ENCODE measurements at regions of chr7 and their contacts with region 1.

Region 1: GRCh38 chr7:99374103-99375064 is at the start of gene ARPC1B:
- H3K4me3 Mint-ChIP-seq: peak within 1 kb of the TSS; percentile 86
- H3K27ac Mint-ChIP-seq: peak within 1 kb of the TSS; percentile 92
- H3K4me1 Mint-ChIP-seq: peaks cover 70% of the 10 kb centered on the region
- H3K27me3 Mint-ChIP-seq: no peaks in the 10 kb centered on the region

Region 2: DNA sequence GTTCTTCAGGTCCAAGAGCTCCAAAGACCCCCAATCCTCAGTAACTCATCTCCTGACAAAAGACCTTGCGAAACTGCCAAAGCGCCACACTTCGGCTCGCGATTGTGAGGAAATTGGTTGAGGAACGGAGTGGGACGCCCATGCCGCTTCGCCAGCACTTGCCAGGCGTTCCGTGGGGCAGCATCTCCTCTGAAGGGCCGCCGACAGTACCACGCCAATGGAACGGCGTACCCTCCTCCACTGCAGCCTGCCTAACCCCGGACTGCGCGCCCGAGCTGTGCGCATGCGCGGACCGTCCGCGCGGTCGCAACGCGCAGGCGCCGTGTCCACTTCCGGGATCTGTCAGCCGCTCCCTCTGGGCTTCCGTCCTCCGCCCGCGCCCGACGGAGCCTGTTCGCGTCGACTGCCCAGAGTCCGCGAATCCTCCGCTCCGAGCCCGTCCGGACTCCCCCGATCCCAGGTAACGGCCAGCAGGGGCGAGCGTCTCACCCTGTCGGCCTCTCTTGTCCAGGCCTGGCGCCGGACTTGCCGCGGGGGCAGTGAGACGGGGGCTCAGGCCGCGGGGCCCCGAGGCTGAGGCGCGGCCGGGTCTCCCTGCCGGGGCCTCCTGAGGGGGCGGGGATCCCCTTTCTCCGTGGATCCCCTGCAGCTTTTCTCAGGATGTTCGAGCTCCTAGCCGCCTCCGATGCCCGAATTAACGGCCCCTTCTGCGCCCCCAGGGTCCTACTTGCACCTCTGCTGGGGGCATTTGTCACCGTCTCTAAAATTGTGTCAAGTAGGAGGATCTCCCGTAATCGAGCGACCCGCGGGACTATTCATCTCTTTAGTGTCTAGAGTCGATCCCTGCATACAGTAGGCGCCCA is 48.6 kb before region 1 on chr7 and contains the start of gene ARPC1A:
- intact Hi-C with region 1: loop called (anchors 5 kb)
- H3K4me3 Mint-ChIP-seq: peak within 1 kb of the TSS; percentile 72
- H3K27ac Mint-ChIP-seq: peak within 1 kb of the TSS; percentile 91
- H3K4me1 Mint-ChIP-seq: peaks cover 49% of the 10 kb centered on the region
- H3K27me3 Mint-ChIP-seq: no peaks in the 10 kb centered on the region

Region 3: GRCh38 chr7:99340659-99341058 is 33.7 kb before region 1 on chr7:
- intact Hi-C with region 1: no loop called
- H3K4me3 Mint-ChIP-seq: no peak overlapping the region
- H3K27ac Mint-ChIP-seq: no peak overlapping the region
- H3K4me1 Mint-ChIP-seq: no peaks in the 10 kb centered on the region
- H3K27me3 Mint-ChIP-seq: no peaks in the 10 kb centered on the region

Region 4: GRCh38 chr7:99385564-99385963 is 11.2 kb after region 1 on chr7:
- intact Hi-C with region 1: loop called (anchors 1 kb)
- H3K4me3 Mint-ChIP-seq: peak overlapping the region; percentile 32
- H3K27ac Mint-ChIP-seq: peak overlapping the region; percentile 81
- H3K4me1 Mint-ChIP-seq: peaks cover 74% of the 10 kb centered on the region
- H3K27me3 Mint-ChIP-seq: no peaks in the 10 kb centered on the region

Region 5: GRCh38 chr7:99408379-99409191 is 34.2 kb after region 1 on chr7 and contains the starts of genes BUD31 and PDAP1:
- intact Hi-C with region 1: loop called (anchors 2 kb)
- H3K4me3 Mint-ChIP-seq: peak within 1 kb of the TSS; percentile 97
- H3K27ac Mint-ChIP-seq: peak within 1 kb of the TSS; percentile 90
- H3K4me1 Mint-ChIP-seq: peaks cover 42% of the 10 kb centered on the region
- H3K27me3 Mint-ChIP-seq: no peaks in the 10 kb centered on the region